Body of pancreas (tissue), 4 donors: ENCODE measurements at regions of chr12 and their contacts with region 1.

Region 1: DNA sequence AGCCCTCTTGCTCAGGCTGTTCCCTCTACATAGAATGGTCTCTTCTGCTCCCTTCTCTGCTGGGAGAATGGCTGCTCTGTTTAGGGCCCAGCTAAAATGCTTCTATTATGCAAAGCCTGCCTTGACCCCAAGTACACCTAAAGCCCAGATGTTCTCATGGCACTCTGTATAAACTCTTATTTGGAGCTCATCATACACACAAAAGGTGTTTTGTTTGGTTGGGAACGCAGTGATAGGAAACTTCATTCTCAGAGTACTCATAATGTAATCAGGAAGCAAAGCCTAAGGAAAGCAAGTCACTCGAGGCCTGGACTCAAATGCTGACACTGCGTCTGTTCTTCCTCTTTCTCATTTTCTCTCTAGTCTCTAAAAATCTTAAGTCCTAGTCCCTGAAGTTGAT is 38.2 kb upstream of the SYCP3 start:
- DNase-seq: no peak
- ATAC-seq: no peak
- H3K4me3 ChIP-seq: no peak overlapping the region
- H3K27ac ChIP-seq: no peak overlapping the region
- H3K4me1 ChIP-seq: no peaks in the 10 kb centered on the region
- H3K27me3 ChIP-seq: no peaks in the 10 kb centered on the region
- CTCF ChIP-seq: no peak
- POLR2A ChIP-seq: no peak

Region 2: DNA sequence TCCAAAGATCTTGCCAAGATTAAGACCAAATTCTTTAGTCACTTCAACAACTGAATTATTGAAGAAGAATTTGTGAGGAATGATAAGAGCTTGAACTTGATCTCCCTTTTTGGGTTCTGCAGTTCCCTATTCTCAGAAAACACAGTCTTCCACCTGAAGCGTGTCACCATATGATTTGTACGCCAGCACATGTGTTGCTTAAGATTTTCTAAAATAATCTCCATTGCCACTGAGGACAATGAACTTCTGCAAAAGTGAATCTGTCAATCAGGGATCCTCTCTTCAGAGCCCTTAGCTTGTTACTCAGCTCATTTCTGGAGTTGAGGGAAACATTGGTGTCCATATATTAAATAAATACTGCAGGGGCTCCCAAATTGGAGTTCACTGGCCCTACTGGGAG is 306.5 kb before region 1 on chr12:
- intact Hi-C with region 1: no loop called
- DNase-seq: no peak
- ATAC-seq: no peak
- H3K4me3 ChIP-seq: no peak overlapping the region
- H3K27ac ChIP-seq: no peak overlapping the region
- H3K4me1 ChIP-seq: no peaks in the 10 kb centered on the region
- H3K27me3 ChIP-seq: no peaks in the 10 kb centered on the region
- CTCF ChIP-seq: no peak
- POLR2A ChIP-seq: no peak

Region 3: GRCh38 chr12:101839324-101840283 is 62.1 kb after region 1 on chr12:
- intact Hi-C with region 1: loop called (anchors 5 kb)
- DNase-seq: peak; percentile 74 to 80 (median 78)
- ATAC-seq: peak; percentile 77
- H3K4me3 ChIP-seq: no peak overlapping the region
- H3K27ac ChIP-seq: no peak overlapping the region
- H3K4me1 ChIP-seq: no peaks in the 10 kb centered on the region
- H3K27me3 ChIP-seq: no peaks in the 10 kb centered on the region
- CTCF ChIP-seq: peak; percentile 65 to 88 (median 82)
- POLR2A ChIP-seq: no peak